ENCODE measurements at regions of chr18 and their contacts with region 1.

Region 1: DNA sequence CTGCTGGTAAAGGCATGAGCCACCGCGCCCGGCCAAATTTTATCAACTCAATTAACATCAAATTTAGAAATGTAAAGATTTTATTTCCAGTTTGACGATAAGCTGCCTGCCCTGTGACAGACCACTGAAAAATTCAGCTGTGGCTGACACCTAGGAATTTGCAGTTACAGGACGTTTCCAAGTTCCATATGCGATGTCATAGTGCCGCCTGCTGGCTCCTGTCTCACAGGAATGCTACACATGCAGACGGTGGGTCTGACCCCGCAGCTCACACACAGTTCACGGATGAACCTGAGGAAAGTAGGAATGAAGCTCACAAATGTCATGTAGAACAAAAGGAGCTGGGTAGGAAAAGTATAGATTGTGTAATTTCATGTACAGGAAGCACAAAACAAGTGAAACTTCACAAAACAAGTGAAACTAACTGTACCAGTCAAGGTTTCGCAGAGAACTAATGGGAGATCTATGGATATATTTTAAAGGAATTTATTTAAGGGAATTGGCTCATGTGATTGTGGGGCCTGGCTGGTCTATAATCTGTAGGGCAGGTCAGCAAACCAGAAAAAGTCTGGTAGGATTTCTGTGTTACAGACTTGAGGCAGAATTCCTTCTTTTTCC is 13.2 kb upstream of the SEH1L start:
- DNase-seq: peak; percentile 89
- ATAC-seq: peak; percentile 87

Region 2: DNA sequence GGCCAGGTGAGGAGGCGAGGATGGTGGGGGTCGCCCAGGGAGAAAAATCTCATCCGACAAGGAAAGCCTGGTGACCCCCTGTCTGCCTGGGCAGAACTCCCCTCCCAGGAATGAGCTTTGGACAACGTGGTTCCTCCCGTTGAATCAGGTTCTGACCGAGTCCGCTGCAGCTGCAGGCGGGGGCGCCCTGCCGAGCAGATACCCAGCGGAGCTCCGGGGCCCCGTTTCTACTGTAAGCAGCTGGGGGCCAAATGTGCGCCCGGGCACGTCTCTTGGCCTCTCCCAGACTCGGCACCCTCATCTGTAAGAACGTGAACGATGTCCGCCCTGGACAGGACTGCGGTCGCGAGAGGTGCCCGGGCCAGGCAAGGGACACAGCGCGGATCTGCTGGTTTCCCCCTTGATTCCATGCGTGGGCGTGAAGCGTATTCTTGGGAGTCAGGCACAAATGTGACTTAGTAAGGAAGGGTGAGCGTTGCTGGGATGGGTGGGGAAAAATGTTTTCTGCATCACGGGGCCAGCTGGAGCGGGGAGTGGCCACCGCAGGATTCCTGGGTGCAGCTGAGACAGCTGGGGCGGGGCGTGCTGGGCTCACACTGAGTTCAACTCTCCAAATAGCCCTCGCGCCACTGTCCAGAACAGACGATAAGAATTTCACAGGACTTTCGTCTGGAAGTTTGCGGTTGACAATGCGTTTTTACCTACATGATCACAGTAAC is 646.7 kb before region 1 on chr18:
- intact Hi-C with region 1: no loop called
- DNase-seq: peak; percentile 90
- ATAC-seq: peak; percentile 92

Region 3: DNA sequence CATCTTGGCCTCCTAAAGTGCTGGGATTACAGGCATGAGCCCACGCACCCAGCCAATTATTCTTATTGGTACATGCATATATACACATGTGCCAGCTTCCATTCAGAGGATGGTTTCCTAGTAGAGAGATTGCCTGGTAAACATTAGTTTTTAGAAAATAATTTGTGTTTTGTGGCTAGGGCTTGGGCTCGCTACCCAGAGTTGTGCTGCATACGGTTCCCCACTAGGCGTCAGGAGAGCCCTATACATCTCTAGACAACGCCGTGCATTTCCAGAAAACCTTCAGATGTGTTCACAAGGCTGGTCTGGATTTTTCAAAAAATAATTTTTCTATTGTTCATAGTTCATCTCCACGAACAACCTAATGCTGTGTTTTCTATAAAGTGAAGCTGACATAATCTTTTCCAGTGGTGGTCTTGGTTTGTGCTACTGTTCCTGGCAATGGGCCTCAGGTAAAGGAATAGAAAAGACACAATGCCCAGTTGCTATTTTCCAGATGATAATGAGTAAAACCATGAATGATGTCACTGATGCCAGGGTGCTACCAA is 542.9 kb before region 1 on chr18:
- intact Hi-C with region 1: loop called (anchors 10 kb)
- DNase-seq: no peak
- ATAC-seq: peak; percentile 90

Region 4: GRCh38 chr18:12726774-12727550 is 207.6 kb before region 1 on chr18:
- intact Hi-C with region 1: loop called (anchors 2 kb)
- DNase-seq: no peak
- ATAC-seq: no peak

Region 5: GRCh38 chr18:12744103-12744502 is 190.5 kb before region 1 on chr18:
- intact Hi-C with region 1: loop called (anchors 1 kb)
- DNase-seq: no peak
- ATAC-seq: no peak

Region 6: DNA sequence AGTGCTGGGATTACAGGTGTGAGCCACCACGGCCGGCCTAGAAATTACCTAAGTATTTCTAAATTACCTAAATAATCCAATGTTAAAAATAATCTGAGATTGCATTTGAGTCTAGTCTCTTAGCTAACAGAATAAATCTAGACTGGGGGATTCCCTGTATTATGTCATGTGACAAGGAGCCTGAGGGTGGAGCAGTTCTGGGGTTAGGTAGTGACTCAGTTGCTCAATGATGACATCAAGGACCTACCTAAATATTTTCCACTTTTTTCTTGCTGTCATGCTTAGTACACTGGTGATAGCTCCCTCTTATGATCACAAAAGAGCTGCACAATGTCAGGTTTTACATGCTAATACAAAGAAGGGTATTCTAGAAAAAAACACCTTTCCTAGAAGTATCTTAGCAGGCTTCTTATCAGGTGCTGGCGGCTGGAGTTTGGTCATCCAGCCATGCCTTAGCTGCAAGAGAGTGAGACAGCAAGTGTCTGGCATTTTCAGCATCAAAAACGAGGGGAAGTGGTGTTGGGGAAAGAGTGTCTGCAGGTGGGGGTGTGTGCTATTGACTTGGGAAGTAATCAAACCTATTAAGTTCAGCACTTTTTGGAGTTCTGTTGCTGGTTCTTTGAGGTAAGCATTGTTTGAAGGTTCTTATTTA is 39.1 kb after region 1 on chr18:
- intact Hi-C with region 1: no loop called
- DNase-seq: no peak
- ATAC-seq: no peak

Measured in Right ventricle myocardium inferior (tissue), 1 donor.